ENCODE measurements at regions of chr6 and their contacts with region 1.

Region 1: DNA sequence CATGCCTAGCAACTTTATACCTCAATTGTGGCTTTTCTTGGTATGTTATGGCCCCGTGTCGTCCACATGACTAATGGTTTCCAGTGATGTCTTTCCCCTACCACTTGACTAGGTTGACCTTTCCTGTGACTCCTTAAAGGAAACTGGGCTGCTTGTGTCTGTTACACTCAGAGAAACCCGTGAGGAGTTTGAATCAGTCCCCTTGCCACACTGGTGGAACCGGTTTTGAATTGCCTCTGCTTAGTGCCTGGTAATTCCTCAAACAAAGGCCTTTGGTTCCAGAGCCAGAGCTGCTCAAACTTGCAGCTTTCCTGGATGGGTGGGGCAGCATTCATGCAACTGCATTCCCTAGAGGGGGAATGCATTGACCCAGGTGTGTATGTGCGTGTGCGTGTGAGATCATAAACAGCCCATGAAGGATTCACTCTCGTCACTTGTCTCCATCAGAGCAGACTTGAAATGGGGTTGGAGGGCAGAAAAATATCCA is 22.0 kb downstream of the ECT2L start:
- DNase-seq: peak; percentile 94 to 97
- H3K4me3 ChIP-seq: no peak overlapping the region
- H3K4me3 Mint-ChIP-seq: peak overlapping the region; percentile 42
- H3K27ac Mint-ChIP-seq: peak overlapping the region; percentile 92
- H3K4me1 ChIP-seq: peaks cover 36% of the 10 kb centered on the region
- H3K4me1 Mint-ChIP-seq: peaks cover 42% of the 10 kb centered on the region
- H3K27me3 ChIP-seq: no peaks in the 10 kb centered on the region
- H3K27me3 Mint-ChIP-seq: no peaks in the 10 kb centered on the region
- CTCF ChIP-seq: no peak

Region 2: DNA sequence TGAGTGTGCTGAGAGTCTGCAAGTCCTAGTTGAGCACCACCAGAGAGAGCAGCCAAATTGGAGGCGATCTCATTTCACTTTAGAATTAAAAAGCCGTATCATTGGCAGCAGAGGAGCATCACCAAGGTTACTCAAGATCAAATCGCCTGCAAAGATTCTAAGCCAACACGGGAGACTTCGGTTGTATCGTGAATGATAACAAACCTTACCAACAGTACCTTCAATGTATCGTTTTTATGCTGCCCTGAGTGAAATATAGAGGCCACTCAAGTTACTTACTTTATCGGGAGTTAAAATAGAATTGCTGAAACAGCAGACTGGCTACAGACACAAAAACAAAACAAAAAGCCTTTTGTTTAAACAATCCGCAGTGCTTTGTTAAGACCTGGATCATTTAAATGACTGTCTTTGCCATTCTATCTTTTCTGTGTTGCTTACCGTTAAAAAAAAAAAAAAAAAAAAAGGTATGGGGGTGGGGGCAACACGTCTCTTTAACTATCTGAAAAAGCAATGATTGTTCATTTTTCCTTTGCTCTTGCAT is 332.8 kb before region 1 on chr6:
- CTCF ChIA-PET with region 1: no interaction called
- POLR2A ChIA-PET with region 1: no interaction called
- intact Hi-C with region 1: no loop called
- DNase-seq: no peak
- H3K4me3 ChIP-seq: no peak overlapping the region
- H3K4me3 Mint-ChIP-seq: no peak overlapping the region
- H3K27ac Mint-ChIP-seq: no peak overlapping the region
- H3K4me1 ChIP-seq: peaks cover 22% of the 10 kb centered on the region
- H3K4me1 Mint-ChIP-seq: peaks cover 29% of the 10 kb centered on the region
- H3K27me3 ChIP-seq: no peaks in the 10 kb centered on the region
- H3K27me3 Mint-ChIP-seq: no peaks in the 10 kb centered on the region
- CTCF ChIP-seq: no peak

Region 3: DNA sequence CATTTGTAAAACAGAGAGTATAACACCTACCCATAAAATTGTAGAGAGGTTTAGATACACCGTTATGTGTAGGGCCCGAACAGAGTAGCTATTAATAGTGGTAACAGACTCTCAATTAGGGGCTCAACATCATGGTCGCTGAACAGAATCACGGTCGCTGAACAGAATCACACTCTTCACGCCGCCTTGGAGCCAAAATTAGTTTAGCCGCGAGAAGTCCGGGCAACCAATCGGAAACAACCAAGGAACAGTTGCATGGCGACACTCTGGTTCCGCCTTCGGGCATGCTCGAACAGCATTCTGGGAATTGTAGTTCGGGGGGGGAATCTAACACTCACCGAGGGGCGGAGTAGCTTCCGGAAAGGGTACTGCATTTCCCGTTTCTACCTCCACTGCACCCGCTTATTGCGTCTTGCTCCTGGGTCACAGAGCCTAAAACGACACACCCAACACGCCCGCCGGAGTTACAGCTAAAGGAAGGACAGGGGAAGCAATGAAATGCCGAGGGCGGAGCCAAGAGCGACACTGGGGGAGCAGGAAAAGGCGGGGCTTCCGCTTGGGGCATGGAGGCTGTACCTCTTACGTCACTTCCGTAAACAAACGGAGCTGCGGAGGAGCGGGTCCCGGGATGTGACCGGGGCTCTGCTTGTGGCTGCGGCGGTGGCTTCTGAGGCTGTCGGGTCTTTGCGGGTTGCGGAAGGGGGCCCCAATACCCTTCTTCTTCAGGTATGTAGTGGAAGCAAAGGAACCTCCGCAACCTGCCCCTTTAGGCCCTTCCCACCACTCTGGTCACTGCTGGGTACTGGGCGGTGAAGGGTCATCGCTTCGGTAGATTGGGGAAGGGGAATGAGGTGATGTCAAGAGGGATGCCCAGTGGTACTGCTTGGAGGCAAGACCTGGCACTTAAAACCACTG is 44.4 kb before region 1 on chr6 and contains the start of gene CCDC28A:
- CTCF ChIA-PET with region 1: no interaction called
- POLR2A ChIA-PET with region 1: no interaction called
- intact Hi-C with region 1: no loop called
- DNase-seq: peak; percentile 93 to 94
- H3K4me3 ChIP-seq: peak within 1 kb of the TSS; percentile 63
- H3K4me3 Mint-ChIP-seq: peak within 1 kb of the TSS; percentile 86
- H3K27ac Mint-ChIP-seq: peak within 1 kb of the TSS; percentile 96
- H3K4me1 ChIP-seq: no peaks in the 10 kb centered on the region; the same call in 1 of the 2 replicates
- H3K4me1 Mint-ChIP-seq: no peaks in the 10 kb centered on the region
- H3K27me3 ChIP-seq: no peaks in the 10 kb centered on the region
- H3K27me3 Mint-ChIP-seq: no peaks in the 10 kb centered on the region
- CTCF ChIP-seq: no peak
- total RNA-seq, gene CCDC28A: 8.9 and 10.8 TPM in 2 replicates

Region 4: DNA sequence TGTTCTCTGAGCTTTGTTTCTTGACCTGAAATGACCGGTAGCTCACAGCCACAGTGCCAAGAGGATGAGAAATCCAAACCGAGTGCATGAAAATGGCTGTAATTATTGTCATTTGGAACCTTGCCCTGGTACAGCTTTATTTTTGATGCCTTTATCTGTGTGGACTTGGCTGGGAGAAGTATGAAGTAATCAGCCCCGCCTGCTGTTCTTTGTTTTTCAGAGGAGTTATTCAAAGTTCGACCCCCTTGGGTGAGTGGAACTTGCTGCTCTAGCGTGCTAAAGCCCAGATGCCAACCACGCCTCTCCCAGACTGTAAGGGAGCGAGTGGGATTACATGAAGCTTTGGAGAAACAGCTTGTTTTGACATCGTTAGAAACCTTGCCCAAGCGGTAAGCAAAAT is 26.3 kb after region 1 on chr6:
- CTCF ChIA-PET with region 1: no interaction called
- POLR2A ChIA-PET with region 1: no interaction called
- intact Hi-C with region 1: no loop called
- DNase-seq: no peak
- H3K4me3 ChIP-seq: no peak overlapping the region
- H3K4me3 Mint-ChIP-seq: no peak overlapping the region
- H3K27ac Mint-ChIP-seq: no peak overlapping the region
- H3K4me1 ChIP-seq: no peaks in the 10 kb centered on the region
- H3K4me1 Mint-ChIP-seq: no peaks in the 10 kb centered on the region
- H3K27me3 ChIP-seq: no peaks in the 10 kb centered on the region
- H3K27me3 Mint-ChIP-seq: no peaks in the 10 kb centered on the region
- CTCF ChIP-seq: no peak

Region 5: DNA sequence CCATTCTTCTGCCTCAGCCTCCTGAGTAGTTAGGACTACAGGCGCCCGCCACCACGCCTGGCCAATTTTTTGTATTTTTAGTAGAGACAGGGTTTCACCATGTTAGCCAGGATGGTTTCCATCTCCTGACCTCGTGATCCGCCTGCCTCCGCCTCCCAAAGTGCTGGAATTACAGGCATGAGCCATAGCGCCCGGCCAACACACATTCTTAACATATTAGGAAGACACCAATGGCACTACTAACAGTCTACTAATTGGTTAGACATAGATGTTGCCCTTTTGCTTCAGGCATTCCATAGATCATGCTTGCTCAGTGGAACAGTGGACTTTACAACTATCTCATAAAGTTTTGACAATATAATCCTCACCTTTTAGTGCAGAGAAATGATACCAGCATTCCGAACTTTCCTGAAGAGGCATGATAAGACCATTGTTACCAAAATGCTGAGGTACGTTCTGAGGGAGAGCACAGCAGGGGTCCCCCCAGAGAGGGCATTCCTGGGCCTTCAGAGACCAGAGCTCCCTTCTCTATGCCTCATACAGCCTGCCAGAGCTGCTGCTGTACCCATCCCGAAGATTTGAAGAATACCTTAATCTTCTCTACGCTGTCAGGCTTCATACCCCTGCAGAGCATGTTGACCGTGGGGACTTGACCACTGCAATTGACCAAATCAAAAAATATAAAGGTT is 67.4 kb after region 1 on chr6:
- CTCF ChIA-PET with region 1: no interaction called
- POLR2A ChIA-PET with region 1: no interaction called
- intact Hi-C with region 1: loop called (anchors 5 kb)
- DNase-seq: no peak
- H3K4me3 ChIP-seq: no peak overlapping the region
- H3K4me3 Mint-ChIP-seq: no peak overlapping the region
- H3K27ac Mint-ChIP-seq: no peak overlapping the region
- H3K4me1 ChIP-seq: no peaks in the 10 kb centered on the region
- H3K4me1 Mint-ChIP-seq: peaks cover 7% of the 10 kb centered on the region
- H3K27me3 ChIP-seq: no peaks in the 10 kb centered on the region
- H3K27me3 Mint-ChIP-seq: no peaks in the 10 kb centered on the region
- CTCF ChIP-seq: no peak

Region 6: GRCh38 chr6:138944412-138944811 is 126.5 kb after region 1 on chr6:
- CTCF ChIA-PET with region 1: no interaction called
- POLR2A ChIA-PET with region 1: no interaction called
- intact Hi-C with region 1: loop called (anchors 2 kb)
- DNase-seq: no peak
- H3K4me3 ChIP-seq: no peak overlapping the region
- H3K4me3 Mint-ChIP-seq: no peak overlapping the region
- H3K27ac Mint-ChIP-seq: no peak overlapping the region
- H3K4me1 ChIP-seq: peaks cover 14% of the 10 kb centered on the region
- H3K4me1 Mint-ChIP-seq: peaks cover 22% of the 10 kb centered on the region
- H3K27me3 ChIP-seq: no peaks in the 10 kb centered on the region
- H3K27me3 Mint-ChIP-seq: no peaks in the 10 kb centered on the region
- CTCF ChIP-seq: no peak

Region 7: DNA sequence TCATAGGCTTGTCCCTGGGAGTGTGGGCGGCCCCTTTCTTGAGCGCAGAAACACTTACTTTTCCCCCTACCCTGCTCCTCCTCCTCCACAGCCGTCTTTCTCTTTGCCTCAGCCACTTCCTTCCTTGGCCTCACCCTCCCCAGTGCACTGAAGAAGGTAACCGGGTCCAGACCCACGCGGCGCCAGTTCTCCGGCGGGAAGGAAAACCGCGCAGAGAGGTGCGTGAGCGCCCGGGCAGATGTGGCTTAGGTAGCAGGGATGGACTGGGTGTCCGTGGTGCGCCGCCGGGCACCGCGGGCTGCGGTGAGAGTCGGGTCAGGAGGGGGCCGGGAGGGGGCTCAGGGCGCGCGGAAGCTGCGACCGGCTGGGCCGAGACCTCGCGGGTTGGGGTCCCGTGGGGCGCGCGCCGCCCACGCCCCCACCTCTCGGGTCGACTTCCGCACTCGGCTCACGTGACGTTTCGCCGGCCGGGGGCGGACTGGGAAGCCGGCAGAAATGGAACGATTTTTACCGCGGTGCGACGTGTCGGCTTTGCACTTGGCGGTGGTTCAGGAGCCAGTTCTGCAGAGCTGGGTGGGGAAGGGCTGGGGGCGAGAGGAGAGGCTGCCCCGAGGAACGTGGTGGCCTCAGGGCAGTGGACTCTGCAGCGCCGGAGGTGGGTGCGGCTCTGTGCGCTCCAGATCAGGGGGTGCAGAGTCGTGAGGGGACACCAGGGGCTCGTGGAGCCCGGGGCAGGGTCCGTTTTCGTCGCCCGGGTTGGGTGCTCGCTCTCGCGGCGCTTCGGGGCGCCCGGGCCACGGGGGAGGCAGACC is 211.0 kb after region 1 on chr6 and contains the start of gene ABRACL:
- CTCF ChIA-PET with region 1: no interaction called
- POLR2A ChIA-PET with region 1: no interaction called
- intact Hi-C with region 1: loop called (anchors 1 kb)
- DNase-seq: peak; percentile 82 to 83
- H3K4me3 ChIP-seq: peak within 1 kb of the TSS; percentile 78
- H3K4me3 Mint-ChIP-seq: no peak within 1 kb of the TSS
- H3K27ac Mint-ChIP-seq: peak within 1 kb of the TSS; percentile 84
- H3K4me1 ChIP-seq: peaks cover 2% of the 10 kb centered on the region
- H3K4me1 Mint-ChIP-seq: peaks cover 8% of the 10 kb centered on the region
- H3K27me3 ChIP-seq: no peaks in the 10 kb centered on the region
- H3K27me3 Mint-ChIP-seq: no peaks in the 10 kb centered on the region
- CTCF ChIP-seq: no peak
- total RNA-seq, gene ABRACL: 90.3 and 90.8 TPM in 2 replicates

Region 8: DNA sequence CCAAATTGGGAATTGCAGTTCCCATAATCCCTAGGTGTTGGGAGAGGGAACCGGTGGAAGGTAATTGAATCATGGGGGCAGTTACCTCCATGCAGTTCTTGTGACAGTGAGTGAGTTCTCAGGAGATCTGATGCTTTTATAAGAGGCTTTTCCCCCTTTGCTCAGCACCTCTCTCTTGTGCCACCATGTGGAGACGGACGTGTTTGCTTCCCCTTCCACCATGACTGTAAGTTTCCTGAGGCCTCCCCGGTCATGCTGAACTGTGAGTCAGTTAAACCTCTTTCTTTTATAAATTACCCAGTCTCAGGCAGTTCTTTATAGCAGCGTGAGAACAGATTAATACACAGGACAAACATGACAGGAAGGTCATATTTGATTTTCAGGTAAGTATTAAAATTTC is 291.7 kb after region 1 on chr6:
- CTCF ChIA-PET with region 1: no interaction called
- POLR2A ChIA-PET with region 1: no interaction called
- intact Hi-C with region 1: loop called (anchors 1 kb)
- DNase-seq: peak; percentile 58 to 59
- H3K4me3 ChIP-seq: no peak overlapping the region
- H3K4me3 Mint-ChIP-seq: no peak overlapping the region
- H3K27ac Mint-ChIP-seq: peak overlapping the region; percentile 33
- H3K4me1 ChIP-seq: no peaks in the 10 kb centered on the region
- H3K4me1 Mint-ChIP-seq: no peaks in the 10 kb centered on the region
- H3K27me3 ChIP-seq: no peaks in the 10 kb centered on the region
- H3K27me3 Mint-ChIP-seq: no peaks in the 10 kb centered on the region
- CTCF ChIP-seq: peak; percentile 46 to 62

Region 9: GRCh38 chr6:139364302-139364981 is 546.6 kb after region 1 on chr6:
- CTCF ChIA-PET with region 1: interaction called, 4 read pairs
- POLR2A ChIA-PET with region 1: no interaction called
- intact Hi-C with region 1: loop called (anchors 1 kb)
- DNase-seq: peak in 1 of 2 experiments; percentile 47
- H3K4me3 ChIP-seq: no peak overlapping the region
- H3K4me3 Mint-ChIP-seq: no peak overlapping the region
- H3K27ac Mint-ChIP-seq: no peak overlapping the region
- H3K4me1 ChIP-seq: peaks cover 24% of the 10 kb centered on the region
- H3K4me1 Mint-ChIP-seq: peaks cover 12% of the 10 kb centered on the region
- H3K27me3 ChIP-seq: no peaks in the 10 kb centered on the region
- H3K27me3 Mint-ChIP-seq: no peaks in the 10 kb centered on the region
- CTCF ChIP-seq: peak; percentile 34 to 81